ENCODE measurements at regions of chr12 and their contacts with region 1.

Region 1: DNA sequence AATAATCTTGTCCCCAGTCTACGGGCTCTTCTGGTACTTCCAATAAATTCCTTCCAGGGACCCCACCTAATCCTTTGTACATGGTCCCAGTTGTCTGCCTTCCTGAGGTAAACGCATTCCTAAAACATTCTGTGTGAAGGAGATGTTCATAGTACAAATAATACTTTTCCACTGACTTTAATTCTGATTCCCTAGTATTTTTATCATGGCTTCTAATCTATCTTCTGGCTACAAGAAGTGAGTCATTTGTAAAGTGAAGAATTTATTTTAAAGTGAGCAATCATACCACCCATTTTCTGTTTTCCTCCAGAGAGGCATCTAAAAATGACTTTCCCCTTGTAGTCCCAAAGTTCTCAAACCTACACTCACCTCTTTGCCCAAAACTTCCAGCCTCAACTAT is 65.9 kb upstream of the NUDT4 start:
- DNase-seq: no peak
- H3K4me3 ChIP-seq: no peak overlapping the region
- H3K4me3 Mint-ChIP-seq: no peak overlapping the region
- H3K27ac Mint-ChIP-seq: peak overlapping the region; percentile 34
- H3K4me1 ChIP-seq: peaks cover 45% of the 10 kb centered on the region
- H3K4me1 Mint-ChIP-seq: peaks cover 22% of the 10 kb centered on the region
- H3K27me3 ChIP-seq: no peaks in the 10 kb centered on the region
- H3K27me3 Mint-ChIP-seq: no peaks in the 10 kb centered on the region
- CTCF ChIP-seq: no peak

Region 2: GRCh38 chr12:92928962-92929915 is 382.6 kb before region 1 on chr12 and contains the start of gene EEA1:
- CTCF ChIA-PET with region 1: no interaction called
- POLR2A ChIA-PET with region 1: interaction called, 12 read pairs
- intact Hi-C with region 1: no loop called
- DNase-seq: peak; percentile 97 to 98
- H3K4me3 ChIP-seq: peak within 1 kb of the TSS; percentile 88
- H3K4me3 Mint-ChIP-seq: peak within 1 kb of the TSS; percentile 90
- H3K27ac Mint-ChIP-seq: peak within 1 kb of the TSS; percentile 93
- H3K4me1 ChIP-seq: peaks cover 54% of the 10 kb centered on the region
- H3K4me1 Mint-ChIP-seq: peaks cover 50% of the 10 kb centered on the region
- H3K27me3 ChIP-seq: no peaks in the 10 kb centered on the region
- H3K27me3 Mint-ChIP-seq: no peaks in the 10 kb centered on the region
- CTCF ChIP-seq: peak in 1 of 2 experiments; percentile 12
- total RNA-seq, gene EEA1: 68.9 TPM in 2 replicates

Region 3: GRCh38 chr12:92943482-92944250 is 368.2 kb before region 1 on chr12:
- CTCF ChIA-PET with region 1: no interaction called
- POLR2A ChIA-PET with region 1: interaction called, 3 read pairs
- intact Hi-C with region 1: loop called (anchors 5 kb)
- DNase-seq: no peak
- H3K4me3 ChIP-seq: no peak overlapping the region
- H3K4me3 Mint-ChIP-seq: no peak overlapping the region
- H3K27ac Mint-ChIP-seq: peak overlapping the region; percentile 80
- H3K4me1 ChIP-seq: peaks cover 43% of the 10 kb centered on the region
- H3K4me1 Mint-ChIP-seq: peaks cover 16% of the 10 kb centered on the region
- H3K27me3 ChIP-seq: no peaks in the 10 kb centered on the region
- H3K27me3 Mint-ChIP-seq: no peaks in the 10 kb centered on the region
- CTCF ChIP-seq: peak; percentile 12

Region 4: GRCh38 chr12:93042283-93042682 is 269.5 kb before region 1 on chr12:
- CTCF ChIA-PET with region 1: no interaction called
- POLR2A ChIA-PET with region 1: interaction called, 13 read pairs
- intact Hi-C with region 1: loop called (anchors 5 kb)
- DNase-seq: peak; percentile 72 to 84
- H3K4me3 ChIP-seq: no peak overlapping the region
- H3K4me3 Mint-ChIP-seq: peak overlapping the region; percentile 37
- H3K27ac Mint-ChIP-seq: peak overlapping the region; percentile 87
- H3K4me1 ChIP-seq: peaks cover 46% of the 10 kb centered on the region
- H3K4me1 Mint-ChIP-seq: peaks cover 51% of the 10 kb centered on the region
- H3K27me3 ChIP-seq: no peaks in the 10 kb centered on the region
- H3K27me3 Mint-ChIP-seq: no peaks in the 10 kb centered on the region
- CTCF ChIP-seq: no peak

Region 5: DNA sequence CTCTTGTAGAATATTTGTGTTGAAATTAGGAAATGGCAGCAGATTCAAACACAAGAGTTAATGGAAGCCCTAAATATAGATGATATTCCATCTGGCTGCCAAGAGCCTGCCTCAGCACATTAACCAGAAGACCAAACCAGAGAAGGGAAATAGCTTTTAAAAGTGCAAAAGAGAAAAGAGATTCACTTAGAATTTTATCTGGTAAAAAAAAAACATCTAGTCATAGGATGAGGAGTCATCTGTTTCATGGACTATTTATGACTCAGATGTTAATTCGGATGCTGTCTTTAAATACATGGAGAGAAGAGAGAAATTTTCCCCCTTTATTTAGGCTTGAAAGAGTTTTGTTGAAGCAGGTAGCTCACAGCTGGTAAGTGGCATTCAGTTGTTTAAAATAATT is 135.7 kb before region 1 on chr12:
- CTCF ChIA-PET with region 1: no interaction called
- POLR2A ChIA-PET with region 1: no interaction called
- intact Hi-C with region 1: loop called (anchors 5 kb)
- DNase-seq: no peak
- H3K4me3 ChIP-seq: no peak overlapping the region
- H3K4me3 Mint-ChIP-seq: no peak overlapping the region
- H3K27ac Mint-ChIP-seq: peak overlapping the region; percentile 87
- H3K4me1 ChIP-seq: peaks cover 24% of the 10 kb centered on the region
- H3K4me1 Mint-ChIP-seq: peaks cover 24% of the 10 kb centered on the region
- H3K27me3 ChIP-seq: no peaks in the 10 kb centered on the region
- H3K27me3 Mint-ChIP-seq: no peaks in the 10 kb centered on the region
- CTCF ChIP-seq: no peak

Region 6: DNA sequence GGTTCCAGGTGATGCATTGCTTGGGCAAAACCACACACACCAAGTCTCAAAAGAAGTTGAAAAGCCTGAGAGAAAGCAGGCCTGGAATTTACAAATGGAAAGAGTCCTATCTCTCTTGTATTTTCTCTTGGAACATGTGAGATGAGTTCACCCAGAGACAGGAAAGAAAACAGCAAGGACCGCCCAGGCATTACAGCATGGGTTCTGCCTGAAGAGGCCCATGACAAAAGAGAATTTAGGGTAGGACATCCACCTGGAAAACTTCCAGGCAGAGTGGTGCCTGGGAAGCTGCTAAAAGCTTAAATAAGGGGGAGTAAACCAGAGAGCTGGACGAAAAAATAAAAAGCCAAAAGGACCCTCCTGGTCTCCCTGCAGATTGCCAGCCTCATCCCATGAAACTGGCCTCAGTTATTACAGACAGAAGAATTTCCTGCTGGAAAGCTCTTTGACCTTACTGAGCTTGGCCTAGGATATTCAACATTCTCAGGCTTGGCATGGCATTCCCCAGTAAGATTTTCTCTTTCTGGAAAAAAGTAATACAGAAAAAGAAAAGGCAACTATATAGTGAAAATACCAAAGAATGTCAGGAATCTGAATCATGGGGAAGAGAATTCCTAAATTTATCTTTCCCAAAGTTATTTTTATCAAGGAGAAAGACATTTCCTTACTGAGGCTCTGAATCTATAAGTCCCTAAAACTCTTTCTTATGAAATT is 55.4 kb before region 1 on chr12:
- CTCF ChIA-PET with region 1: no interaction called
- POLR2A ChIA-PET with region 1: no interaction called
- intact Hi-C with region 1: no loop called
- DNase-seq: no peak
- H3K4me3 ChIP-seq: no peak overlapping the region
- H3K4me3 Mint-ChIP-seq: no peak overlapping the region
- H3K27ac Mint-ChIP-seq: no peak overlapping the region
- H3K4me1 ChIP-seq: peaks cover 3% of the 10 kb centered on the region; the same call in 1 of the 2 replicates
- H3K4me1 Mint-ChIP-seq: peaks cover 7% of the 10 kb centered on the region
- H3K27me3 ChIP-seq: no peaks in the 10 kb centered on the region
- H3K27me3 Mint-ChIP-seq: no peaks in the 10 kb centered on the region
- CTCF ChIP-seq: no peak

Region 7: DNA sequence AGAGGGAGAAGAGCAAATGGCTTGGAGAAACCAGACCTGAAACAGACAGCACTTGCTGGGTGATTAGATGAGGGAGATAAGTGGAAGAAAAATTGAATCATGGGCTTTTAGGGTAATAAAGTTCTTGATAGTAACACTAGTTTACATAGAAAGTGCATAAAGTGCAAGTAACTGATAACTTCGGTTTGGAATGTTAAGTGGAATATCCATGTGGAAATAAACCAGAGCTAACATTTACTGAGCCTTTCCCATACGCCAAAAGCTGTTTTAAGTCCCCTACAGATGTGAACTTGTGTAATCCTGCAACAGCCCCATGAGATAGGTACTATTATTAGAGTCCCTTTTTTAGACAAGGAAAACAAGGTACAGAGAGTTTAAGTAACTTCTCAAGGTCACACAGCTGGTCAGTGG is 11.2 kb before region 1 on chr12:
- CTCF ChIA-PET with region 1: no interaction called
- POLR2A ChIA-PET with region 1: interaction called, 3 read pairs
- intact Hi-C with region 1: loop called (anchors 1 kb)
- DNase-seq: peak; percentile 38 to 48
- H3K4me3 ChIP-seq: no peak overlapping the region
- H3K4me3 Mint-ChIP-seq: peak overlapping the region; percentile 5
- H3K27ac Mint-ChIP-seq: no peak overlapping the region
- H3K4me1 ChIP-seq: peaks cover 29% of the 10 kb centered on the region
- H3K4me1 Mint-ChIP-seq: peaks cover 31% of the 10 kb centered on the region
- H3K27me3 ChIP-seq: no peaks in the 10 kb centered on the region
- H3K27me3 Mint-ChIP-seq: no peaks in the 10 kb centered on the region
- CTCF ChIP-seq: no peak

Region 8: DNA sequence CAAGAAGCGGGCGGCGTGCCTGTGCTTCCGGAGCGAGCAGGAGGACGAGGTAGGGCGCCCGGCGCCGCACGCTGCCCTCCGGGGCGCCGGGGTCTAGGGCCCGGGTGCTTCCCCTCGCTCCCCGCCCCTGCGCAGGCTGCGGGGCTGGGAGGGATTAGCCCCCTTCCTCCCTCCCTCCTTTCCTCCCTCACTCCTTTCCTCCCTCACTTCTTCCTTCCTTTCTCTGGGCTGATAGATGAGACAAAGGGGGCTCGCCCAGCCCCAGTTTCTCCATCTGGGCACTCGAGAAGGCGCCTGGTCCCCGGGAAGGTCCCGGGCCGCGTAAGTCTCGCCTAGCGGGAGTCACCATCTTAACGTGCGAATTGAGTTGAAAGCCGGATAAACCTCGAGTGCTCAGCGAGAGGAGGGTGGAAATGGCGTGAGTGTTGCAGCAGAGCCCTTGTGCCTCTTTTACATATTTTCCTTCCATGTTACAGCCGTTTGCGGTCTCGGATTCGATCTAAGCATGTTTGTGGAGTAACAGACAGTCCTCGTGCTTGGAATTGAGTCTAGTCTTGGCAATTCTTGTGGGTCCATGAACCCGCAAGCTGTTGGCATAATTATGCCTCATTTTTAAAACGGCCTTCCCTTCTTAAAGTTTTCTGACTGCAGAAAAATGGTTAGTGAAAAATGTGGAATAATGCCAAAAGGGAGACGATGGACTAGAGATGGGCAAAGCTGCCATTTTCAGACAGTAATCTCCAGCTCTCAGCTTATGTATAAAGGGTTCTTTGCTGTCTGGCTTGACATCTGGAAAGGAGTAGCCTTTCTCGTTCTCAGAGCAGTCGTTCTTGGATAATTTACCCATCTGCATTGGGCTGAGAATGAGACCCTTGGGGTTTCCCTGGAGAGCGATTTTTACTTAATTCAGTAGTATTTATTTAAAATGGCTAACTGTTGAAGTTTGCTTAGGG is 66.8 kb after region 1 on chr12:
- CTCF ChIA-PET with region 1: interaction called, 4 read pairs
- POLR2A ChIA-PET with region 1: interaction called, 5 read pairs
- intact Hi-C with region 1: loop called (anchors 1 kb)
- DNase-seq: peak in 1 of 2 experiments; percentile 26
- H3K4me3 ChIP-seq: peak overlapping the region; percentile 83
- H3K4me3 Mint-ChIP-seq: peak overlapping the region; percentile 80
- H3K27ac Mint-ChIP-seq: peak overlapping the region; percentile 90
- H3K4me1 ChIP-seq: peaks cover 36% of the 10 kb centered on the region
- H3K4me1 Mint-ChIP-seq: peaks cover 25% of the 10 kb centered on the region
- H3K27me3 ChIP-seq: no peaks in the 10 kb centered on the region
- H3K27me3 Mint-ChIP-seq: no peaks in the 10 kb centered on the region
- CTCF ChIP-seq: no peak

Measured in Caco-2 (cell line).